ENCODE measurements at regions of chr3 and their contacts with region 1.

Region 1: DNA sequence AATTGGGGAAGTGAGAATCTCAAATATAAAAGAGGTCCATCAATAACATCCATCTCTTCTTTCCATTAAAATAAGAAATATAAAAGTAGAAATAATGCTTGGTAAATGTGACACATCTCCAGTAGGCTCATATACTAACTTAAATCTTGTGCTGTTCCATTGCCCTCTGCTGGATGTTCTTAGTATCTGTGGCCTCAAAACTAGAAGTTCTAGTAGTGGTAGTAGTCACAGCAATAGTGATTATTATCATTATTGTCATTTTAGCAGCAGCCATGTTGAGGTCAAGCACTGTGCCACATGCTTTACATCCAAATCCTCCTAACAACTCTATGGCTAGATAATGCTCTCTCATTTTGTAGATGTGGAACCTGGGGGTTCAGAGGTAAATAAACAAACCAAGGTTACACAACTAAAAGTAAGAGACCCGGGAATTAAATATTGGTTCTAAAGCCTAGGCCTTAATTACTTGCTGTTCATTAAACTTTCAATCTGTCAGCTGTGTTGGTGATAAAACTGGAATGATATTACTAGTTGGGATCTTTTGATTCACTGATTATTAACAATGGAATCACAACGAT is 20.2 kb upstream of the BTLA start:
- DNase-seq: peak; percentile 59
- CTCF ChIP-seq: peak; percentile 62

Region 2: DNA sequence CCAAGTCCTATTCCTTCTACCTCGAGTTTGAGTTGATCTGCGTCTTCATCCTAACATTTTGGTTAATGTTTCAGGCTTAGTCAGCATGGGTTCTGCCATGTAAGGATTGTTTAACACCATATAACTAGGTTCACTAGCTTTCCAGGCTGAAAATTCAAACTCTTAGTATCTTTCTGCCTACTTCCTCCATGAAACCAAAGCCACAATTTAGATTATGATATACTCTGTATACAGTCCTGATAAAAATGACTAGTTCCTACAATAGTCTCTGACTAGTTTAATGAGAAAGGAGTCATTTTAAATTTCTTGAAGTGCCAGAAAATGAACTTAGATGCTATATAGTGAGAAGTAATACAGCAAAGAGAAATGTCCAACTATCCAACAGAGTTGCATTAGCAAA is 13.6 kb before region 1 on chr3:
- CTCF ChIA-PET with region 1: interaction called, 10 read pairs
- POLR2A ChIA-PET with region 1: no interaction called
- DNase-seq: no peak
- CTCF ChIP-seq: no peak

Region 3: GRCh38 chr3:112531358-112531781 is 11.9 kb after region 1 on chr3:
- CTCF ChIA-PET with region 1: interaction called, 10 read pairs
- POLR2A ChIA-PET with region 1: no interaction called
- DNase-seq: peak; percentile 26
- CTCF ChIP-seq: peak; percentile 27

Region 4: GRCh38 chr3:112676659-112677234 is 157.2 kb after region 1 on chr3:
- CTCF ChIA-PET with region 1: no interaction called
- POLR2A ChIA-PET with region 1: no interaction called
- DNase-seq: peak; percentile 83
- CTCF ChIP-seq: no peak